ENCODE measurements at regions of chr3 and their contacts with region 1.

Region 1: DNA sequence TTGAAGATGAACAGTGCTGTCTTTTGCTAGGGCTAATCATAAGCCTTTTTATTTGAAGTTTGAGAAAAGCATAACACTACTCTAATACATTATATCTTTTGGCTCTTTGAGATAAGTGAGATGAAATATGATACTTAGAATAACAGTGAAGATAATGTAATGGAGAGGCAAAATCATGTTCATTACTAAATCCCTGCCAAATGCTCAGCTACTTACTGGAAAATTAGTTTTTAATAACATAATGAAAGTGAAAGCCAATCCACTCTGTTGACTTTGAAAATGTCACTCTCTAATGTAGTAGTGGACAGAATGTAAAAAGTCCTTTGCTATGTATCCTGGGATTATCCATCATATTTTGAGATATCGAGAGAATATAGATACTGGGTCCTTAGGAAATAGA is 35.9 kb upstream of the MYH15 start:
- DNase-seq: peak in 1 of 2 donors; percentile 24
- H3K4me3 ChIP-seq: no peak overlapping the region
- H3K27ac ChIP-seq: no peak overlapping the region
- H3K4me1 ChIP-seq: no peaks in the 10 kb centered on the region
- H3K27me3 ChIP-seq: no peaks in the 10 kb centered on the region
- CTCF ChIP-seq: no peak
- EP300 ChIP-seq: no peak
- POLR2A ChIP-seq: no peak

Region 2: DNA sequence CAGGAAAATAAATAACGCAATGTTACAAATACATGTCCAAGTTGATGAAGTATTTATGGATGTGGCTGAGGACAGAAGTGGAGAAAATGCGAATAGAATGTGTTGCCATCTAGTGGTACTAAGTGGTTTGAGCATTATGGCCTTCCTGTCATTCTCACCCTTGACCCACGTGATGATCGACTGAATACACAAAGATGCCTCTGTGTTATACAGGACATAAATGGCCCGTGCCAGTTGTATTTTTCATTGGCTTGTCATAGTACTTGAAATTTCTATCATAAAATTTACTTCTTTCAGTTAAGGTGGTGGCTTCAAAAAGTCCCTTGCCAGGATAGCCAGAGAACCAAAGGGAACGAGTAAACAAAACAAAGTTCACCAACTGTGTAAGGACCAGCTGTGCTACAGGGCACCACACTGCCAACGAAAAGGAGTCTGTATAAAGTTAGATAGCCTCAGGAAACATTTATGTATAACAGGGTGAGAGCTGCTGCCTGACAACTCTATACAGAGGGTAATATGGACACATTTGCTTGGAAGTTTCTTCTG is 139.5 kb before region 1 on chr3:
- intact Hi-C with region 1: no loop called
- DNase-seq: peak in 1 of 2 donors; percentile 80
- H3K4me3 ChIP-seq: no peak overlapping the region
- H3K27ac ChIP-seq: no peak overlapping the region
- H3K4me1 ChIP-seq: peaks cover 4 to 23% (median 4%) of the 10 kb centered on the region in 4 donors
- H3K27me3 ChIP-seq: no peaks in the 10 kb centered on the region
- CTCF ChIP-seq: peak in 4 of 7 experiments; percentile 27 to 41 (median 38)
- EP300 ChIP-seq: no peak
- POLR2A ChIP-seq: no peak

Region 3: DNA sequence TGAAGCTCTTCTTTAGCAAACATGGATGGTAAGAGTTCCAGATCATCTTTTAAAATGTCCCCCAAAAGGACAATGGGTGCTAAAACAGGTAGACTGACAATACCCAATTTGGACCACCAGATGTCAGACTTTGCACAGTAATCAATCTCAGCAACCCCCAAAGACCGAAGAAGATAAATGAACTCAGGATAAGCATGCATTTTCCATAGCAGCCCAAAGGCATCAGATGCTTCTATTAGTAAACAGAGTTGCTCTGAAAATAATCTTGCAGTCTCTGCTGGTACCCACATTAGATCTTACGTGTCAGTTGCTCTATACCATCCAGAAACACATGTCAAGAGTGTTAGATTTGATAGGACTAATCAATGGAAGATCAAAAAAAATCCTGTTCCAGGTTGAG is 56.5 kb before region 1 on chr3:
- intact Hi-C with region 1: loop called (anchors 5 kb)
- DNase-seq: peak in 1 of 2 donors; percentile 81
- H3K4me3 ChIP-seq: no peak overlapping the region
- H3K27ac ChIP-seq: no peak overlapping the region
- H3K4me1 ChIP-seq: peaks cover 0 to 3% (median 0%) of the 10 kb centered on the region in 4 donors
- H3K27me3 ChIP-seq: no peaks in the 10 kb centered on the region
- CTCF ChIP-seq: peak in 5 of 7 experiments; percentile 50 to 82 (median 66)
- EP300 ChIP-seq: no peak
- POLR2A ChIP-seq: no peak

Measured in stomach (tissue), 19 donors.